Uterus (tissue), 4 donors: ENCODE measurements at regions of chr4 and their contacts with region 1.

Region 1: GRCh38 chr4:183261953-183262775 is 57.9 kb downstream of the CLDN22 start:
- DNase-seq: peak; percentile 73 to 80
- H3K4me3 ChIP-seq: no peak overlapping the region
- H3K27ac ChIP-seq: peak overlapping the region; percentile 44 to 75
- H3K4me1 ChIP-seq: no peaks in the 10 kb centered on the region
- H3K27me3 ChIP-seq: no peaks in the 10 kb centered on the region
- CTCF ChIP-seq: peak; percentile 64 to 85 (median 83)
- POLR2A ChIP-seq: no peak

Region 2: GRCh38 chr4:182938205-182938645 is 323.9 kb before region 1 on chr4:
- intact Hi-C with region 1: loop called (anchors 5 kb)
- DNase-seq: peak; percentile 54 to 61
- H3K4me3 ChIP-seq: no peak overlapping the region
- H3K27ac ChIP-seq: no peak overlapping the region
- H3K4me1 ChIP-seq: no peaks in the 10 kb centered on the region
- H3K27me3 ChIP-seq: no peaks in the 10 kb centered on the region
- CTCF ChIP-seq: peak; percentile 75 to 85 (median 79)
- POLR2A ChIP-seq: no peak

Region 3: DNA sequence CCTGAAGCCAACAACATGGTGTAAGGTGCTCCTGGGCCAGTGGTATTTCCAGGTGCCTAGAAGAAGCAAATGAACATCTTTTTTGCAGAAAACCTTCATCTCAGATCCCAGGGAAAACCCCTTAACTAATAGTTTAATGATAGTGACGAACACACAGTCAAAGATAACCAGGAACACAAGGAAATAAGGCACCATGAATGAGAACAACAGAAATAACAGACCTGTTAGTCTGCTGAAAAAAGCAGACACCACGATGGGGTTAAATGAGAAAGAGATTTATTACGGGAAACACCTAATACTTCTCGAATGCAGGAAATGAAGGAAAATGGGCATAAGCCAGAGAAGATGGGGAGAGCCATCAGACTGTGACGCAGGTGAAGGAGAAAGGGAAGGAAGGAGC is 193.7 kb before region 1 on chr4:
- intact Hi-C with region 1: no loop called
- DNase-seq: no peak
- H3K4me3 ChIP-seq: no peak overlapping the region
- H3K27ac ChIP-seq: no peak overlapping the region
- H3K4me1 ChIP-seq: no peaks in the 10 kb centered on the region
- H3K27me3 ChIP-seq: no peaks in the 10 kb centered on the region
- CTCF ChIP-seq: no peak
- POLR2A ChIP-seq: no peak

Region 4: GRCh38 chr4:183078634-183079033 is 183.5 kb before region 1 on chr4:
- intact Hi-C with region 1: loop called (anchors 5 kb)
- DNase-seq: no peak
- H3K4me3 ChIP-seq: no peak overlapping the region
- H3K27ac ChIP-seq: no peak overlapping the region
- H3K4me1 ChIP-seq: no peaks in the 10 kb centered on the region
- H3K27me3 ChIP-seq: no peaks in the 10 kb centered on the region
- CTCF ChIP-seq: no peak
- POLR2A ChIP-seq: no peak